HEK293 (cell line): ENCODE measurements at regions of chr14 and their contacts with region 1.

Region 1: DNA sequence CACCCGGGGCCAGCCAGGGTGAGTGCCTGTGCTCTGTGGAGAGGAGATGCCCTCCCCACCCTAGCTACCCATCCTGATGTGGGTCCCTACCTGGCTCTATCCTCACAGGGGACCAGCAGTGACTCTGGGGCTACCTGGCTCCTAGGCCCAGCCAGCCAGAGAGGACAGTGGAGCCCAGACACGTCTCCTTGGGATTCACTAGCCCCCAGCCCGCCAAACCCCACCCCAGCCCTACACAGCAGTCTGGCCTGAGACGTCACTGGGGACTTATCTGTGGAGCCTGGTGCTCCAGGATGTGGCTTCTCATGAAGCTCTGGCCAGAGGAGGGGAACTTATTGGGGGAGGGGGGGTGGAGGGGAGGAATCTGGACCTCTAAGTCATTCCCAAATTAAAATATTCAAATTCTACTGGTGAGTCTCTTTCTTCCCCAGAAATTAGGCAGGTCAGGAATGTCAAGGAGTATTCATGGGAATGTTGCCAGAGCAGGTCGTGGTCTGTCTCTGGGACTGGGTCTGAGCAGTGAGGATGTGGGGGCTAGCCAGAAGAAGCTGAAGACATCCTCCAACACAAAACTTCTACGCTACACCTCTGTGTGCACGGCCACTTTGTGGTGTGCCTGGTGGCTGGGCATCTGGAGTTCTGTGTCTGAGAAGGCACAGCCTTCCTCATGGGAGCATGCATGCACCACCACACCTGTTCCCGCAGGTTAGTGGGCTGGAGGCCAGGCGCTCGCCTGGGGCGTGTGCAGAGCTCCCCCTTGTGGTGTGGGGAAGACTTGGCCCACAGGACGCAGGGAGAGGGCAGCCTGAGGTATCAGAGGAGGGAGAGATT is 2.7 kb downstream of the CMTM5 start:
- H3K4me3 ChIP-seq: no peak overlapping the region
- H3K27ac ChIP-seq: no peak overlapping the region
- H3K4me1 ChIP-seq: no peaks in the 10 kb centered on the region
- CTCF ChIP-seq: peak; percentile 81

Region 2: GRCh38 chr14:23258256-23258655 is 121.3 kb before region 1 on chr14:
- CTCF ChIA-PET with region 1: interaction called, 16 read pairs
- POLR2A ChIA-PET with region 1: no interaction called
- H3K4me3 ChIP-seq: no peak overlapping the region
- H3K27ac ChIP-seq: no peak overlapping the region
- H3K4me1 ChIP-seq: no peaks in the 10 kb centered on the region
- CTCF ChIP-seq: no peak

Region 3: DNA sequence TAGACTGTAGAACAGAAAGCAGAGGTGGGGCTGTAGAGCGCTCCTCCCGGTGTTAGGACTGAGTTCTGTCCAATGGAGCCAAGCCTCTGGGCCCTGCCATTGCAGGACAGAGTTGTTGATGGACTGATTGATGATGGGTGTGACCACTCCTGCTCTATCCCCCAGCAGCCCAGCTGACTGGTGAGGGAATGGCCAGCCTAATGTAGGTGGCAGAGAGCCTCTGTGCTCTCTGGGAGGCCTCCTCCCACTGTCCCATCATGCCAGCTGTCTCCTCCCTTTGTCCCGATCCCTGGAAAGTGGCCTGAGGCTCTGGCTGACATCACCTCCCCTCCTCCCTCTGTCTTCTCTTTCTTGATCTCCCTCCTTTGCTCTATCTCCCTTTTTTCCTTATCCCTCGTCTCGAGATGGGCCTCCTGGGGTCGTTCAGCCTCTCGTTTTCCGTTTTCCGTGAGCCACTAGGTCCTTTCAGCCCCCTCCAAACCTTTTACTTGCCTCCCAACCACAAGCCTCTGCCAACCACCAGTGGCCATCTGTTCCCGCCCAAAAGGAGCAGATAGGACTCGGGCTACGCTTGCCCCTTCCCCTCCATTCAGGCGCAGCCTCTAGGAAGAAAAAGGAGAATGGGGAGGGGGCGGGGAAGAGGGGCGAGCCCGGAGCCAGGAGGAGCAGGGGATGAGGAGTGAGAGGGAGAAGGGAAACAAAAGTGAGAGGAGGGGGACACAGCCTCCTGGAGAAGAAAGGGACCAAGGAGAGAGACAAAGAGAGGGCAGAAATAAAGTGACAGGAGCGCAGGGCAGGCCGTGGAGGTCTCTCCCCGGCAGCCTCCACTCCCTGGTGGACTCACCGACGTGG is 15.2 kb before region 1 on chr14:
- CTCF ChIA-PET with region 1: interaction called, 18 read pairs
- POLR2A ChIA-PET with region 1: no interaction called
- H3K4me3 ChIP-seq: no peak overlapping the region
- H3K27ac ChIP-seq: no peak overlapping the region
- H3K4me1 ChIP-seq: no peaks in the 10 kb centered on the region
- CTCF ChIP-seq: no peak

Region 4: GRCh38 chr14:23406244-23406643 is 26.7 kb after region 1 on chr14:
- CTCF ChIA-PET with region 1: no interaction called
- POLR2A ChIA-PET with region 1: no interaction called
- H3K4me3 ChIP-seq: no peak overlapping the region
- H3K27ac ChIP-seq: no peak overlapping the region
- H3K4me1 ChIP-seq: no peaks in the 10 kb centered on the region
- CTCF ChIP-seq: no peak